AG04449 (cell line): ENCODE measurements at regions of chr15 and their contacts with region 1.

Region 1: GRCh38 chr15:63402498-63403253 is 21.0 kb upstream of the CA12 start:
- DNase-seq: no peak
- H3K4me3 ChIP-seq: no peak overlapping the region
- CTCF ChIP-seq: peak; percentile 38

Region 2: GRCh38 chr15:63288778-63289378 is 113.8 kb before region 1 on chr15:
- CTCF ChIA-PET with region 1: interaction called, 151 read pairs
- POLR2A ChIA-PET with region 1: interaction called, 5 read pairs
- DNase-seq: no peak
- H3K4me3 ChIP-seq: no peak overlapping the region
- CTCF ChIP-seq: peak; percentile 39

Region 3: DNA sequence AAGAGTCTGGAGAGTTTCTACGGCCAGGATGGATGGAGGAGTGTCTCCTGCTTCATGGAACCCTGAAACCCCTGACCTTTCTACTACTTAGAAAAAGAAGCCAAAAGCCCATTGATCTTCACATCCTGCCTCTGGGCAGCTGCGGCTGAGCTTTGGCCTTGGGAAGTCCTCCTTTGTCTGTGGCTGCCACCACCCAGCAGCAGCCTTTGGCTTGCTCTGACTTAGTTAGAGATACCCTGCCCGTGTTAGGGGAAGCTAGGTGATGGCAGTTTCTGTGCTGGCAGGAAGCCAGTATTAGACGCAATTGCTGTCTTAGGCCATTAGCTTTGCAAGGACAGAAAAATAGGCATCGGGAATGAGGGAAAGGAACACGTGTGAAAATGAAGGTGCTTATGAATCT is 106.5 kb before region 1 on chr15:
- CTCF ChIA-PET with region 1: interaction called, 151 read pairs
- POLR2A ChIA-PET with region 1: interaction called, 5 read pairs
- DNase-seq: no peak
- H3K4me3 ChIP-seq: no peak overlapping the region
- CTCF ChIP-seq: no peak

Region 4: GRCh38 chr15:63389902-63390670 is 12.6 kb before region 1 on chr15:
- CTCF ChIA-PET with region 1: interaction called, 22 read pairs
- POLR2A ChIA-PET with region 1: no interaction called
- DNase-seq: no peak
- H3K4me3 ChIP-seq: no peak overlapping the region
- CTCF ChIP-seq: no peak

Region 5: DNA sequence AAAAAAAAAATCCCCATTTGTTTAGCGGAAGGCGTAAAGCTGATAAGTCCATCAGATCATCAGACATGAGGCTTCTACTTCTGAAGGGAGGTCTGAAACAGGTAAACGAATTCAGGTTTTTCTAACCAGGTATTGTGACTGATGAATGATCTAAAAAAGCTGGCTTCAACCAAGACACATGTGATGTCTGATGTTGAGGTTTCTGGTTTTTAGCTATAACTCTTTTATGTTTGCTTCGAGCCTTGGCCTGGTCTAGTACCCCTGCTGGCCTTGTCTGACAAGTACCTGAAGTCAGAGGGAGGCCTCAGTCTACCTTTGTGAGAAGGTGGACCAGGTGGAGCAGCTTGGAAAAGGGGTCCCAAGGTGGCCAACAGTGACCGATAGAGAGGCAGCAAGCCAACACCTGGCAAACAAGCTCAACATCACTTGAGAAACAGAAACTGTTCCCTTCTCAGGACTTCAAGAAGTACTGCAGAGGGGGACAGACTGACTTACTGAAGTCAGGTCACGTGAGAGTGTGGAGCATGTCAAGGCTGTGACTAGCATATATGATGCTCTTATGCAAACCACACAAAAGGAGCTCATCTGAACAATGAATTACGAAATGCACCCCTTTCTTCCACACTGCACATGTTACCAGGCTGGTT is 11.9 kb after region 1 on chr15:
- CTCF ChIA-PET with region 1: interaction called, 22 read pairs
- POLR2A ChIA-PET with region 1: no interaction called
- DNase-seq: no peak
- H3K4me3 ChIP-seq: no peak overlapping the region
- CTCF ChIP-seq: no peak